GM10248 (cell line): ENCODE measurements at regions of chr1 and their contacts with region 1.

Region 1: GRCh38 chr1:40338745-40339424 is 21.8 kb upstream of the COL9A2 start:
- DNase-seq: peak; percentile 84
- CTCF ChIP-seq: peak; percentile 97

Region 2: DNA sequence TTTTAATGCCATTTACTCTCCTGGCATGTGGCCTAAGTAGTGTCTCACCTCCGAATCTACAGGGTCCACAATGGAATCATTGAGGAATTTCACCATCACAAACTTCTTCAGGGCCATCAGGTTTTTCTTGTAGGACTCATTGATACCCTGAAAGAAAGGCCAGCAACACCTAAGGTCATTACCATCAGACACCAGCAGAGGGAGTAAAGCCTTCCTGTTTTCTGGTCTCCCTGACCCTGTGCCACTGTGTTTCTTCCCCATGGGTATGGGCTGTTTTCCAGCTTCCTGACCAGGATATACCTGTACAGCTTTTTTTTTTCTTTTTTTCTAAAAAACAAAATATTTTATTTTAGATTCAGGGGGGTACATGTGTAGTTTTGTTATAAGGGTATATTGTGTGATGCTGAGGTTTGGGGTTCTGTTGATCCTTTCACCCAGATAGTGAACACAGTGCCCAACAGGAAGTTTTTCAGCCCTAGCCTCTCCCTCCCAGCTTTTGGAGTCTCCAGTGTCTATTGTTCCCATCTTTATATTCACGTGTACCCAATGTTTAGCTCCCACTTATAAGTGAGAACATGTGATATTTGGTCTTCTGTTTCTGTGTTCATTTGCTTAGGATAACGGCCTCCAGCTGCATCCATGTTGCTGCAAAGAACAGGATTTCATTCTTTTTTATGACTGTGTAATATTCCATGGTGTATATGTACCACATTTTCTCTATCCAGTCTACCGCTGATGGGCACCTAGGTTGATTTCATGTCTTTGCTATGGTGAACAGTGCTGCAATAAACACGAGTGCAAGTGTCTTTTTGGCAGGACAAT is 260.2 kb before region 1 on chr1:
- CTCF ChIA-PET with region 1: interaction called, 262 read pairs
- POLR2A ChIA-PET with region 1: no interaction called
- DNase-seq: peak; percentile 69
- CTCF ChIP-seq: peak; percentile 70

Region 3: GRCh38 chr1:40143891-40144575 is 194.9 kb before region 1 on chr1:
- CTCF ChIA-PET with region 1: interaction called, 182 read pairs
- POLR2A ChIA-PET with region 1: no interaction called
- DNase-seq: peak; percentile 54
- CTCF ChIP-seq: peak; percentile 48

Region 4: DNA sequence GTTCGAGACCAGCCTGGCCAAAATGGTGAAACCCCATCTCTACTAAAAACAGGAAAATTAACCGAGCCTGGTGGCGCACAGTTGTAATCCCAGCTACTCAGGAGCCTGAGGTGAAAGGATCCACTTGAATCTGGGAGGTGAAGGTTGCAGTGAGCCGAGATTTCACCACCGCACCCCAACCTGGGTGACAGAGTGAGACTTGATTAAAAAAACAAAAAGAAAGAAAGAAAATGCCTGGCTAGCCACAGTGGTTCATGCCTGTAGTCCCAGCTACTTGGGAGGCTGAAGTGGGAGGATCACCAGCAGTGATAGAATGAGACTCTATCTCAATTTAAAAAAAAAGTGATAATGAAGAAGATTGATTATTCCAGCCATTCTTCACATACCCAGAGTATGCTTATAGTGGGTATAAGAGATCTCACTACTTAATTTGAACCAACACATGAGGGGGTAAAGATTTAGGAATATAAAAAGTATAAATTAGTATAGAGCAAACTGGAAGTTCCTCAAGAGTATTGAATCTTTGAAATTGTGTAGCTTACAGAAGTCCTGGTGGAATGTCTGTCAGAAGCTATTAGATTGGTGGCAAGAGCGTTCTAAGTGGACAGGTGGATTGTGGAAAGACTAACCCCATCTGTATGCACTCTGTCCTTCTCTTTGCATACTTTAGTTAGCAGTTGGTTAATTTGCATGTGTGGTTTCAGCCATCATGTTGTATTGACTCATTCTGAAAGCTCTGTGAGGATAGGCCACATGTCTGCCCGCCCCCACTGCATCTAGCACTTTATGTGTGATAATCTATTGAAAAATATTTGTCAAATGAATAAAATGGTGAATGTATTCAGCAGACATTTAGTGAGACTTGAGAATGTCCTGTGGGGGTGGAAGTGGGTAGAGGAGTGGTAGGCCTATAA is 152.7 kb before region 1 on chr1:
- CTCF ChIA-PET with region 1: interaction called, 10 read pairs
- POLR2A ChIA-PET with region 1: no interaction called
- DNase-seq: peak; percentile 76
- CTCF ChIP-seq: no peak

Region 5: GRCh38 chr1:40352126-40352525 is 13.2 kb after region 1 on chr1:
- CTCF ChIA-PET with region 1: interaction called, 37 read pairs
- POLR2A ChIA-PET with region 1: no interaction called
- DNase-seq: peak; percentile 52
- CTCF ChIP-seq: no peak

Region 6: DNA sequence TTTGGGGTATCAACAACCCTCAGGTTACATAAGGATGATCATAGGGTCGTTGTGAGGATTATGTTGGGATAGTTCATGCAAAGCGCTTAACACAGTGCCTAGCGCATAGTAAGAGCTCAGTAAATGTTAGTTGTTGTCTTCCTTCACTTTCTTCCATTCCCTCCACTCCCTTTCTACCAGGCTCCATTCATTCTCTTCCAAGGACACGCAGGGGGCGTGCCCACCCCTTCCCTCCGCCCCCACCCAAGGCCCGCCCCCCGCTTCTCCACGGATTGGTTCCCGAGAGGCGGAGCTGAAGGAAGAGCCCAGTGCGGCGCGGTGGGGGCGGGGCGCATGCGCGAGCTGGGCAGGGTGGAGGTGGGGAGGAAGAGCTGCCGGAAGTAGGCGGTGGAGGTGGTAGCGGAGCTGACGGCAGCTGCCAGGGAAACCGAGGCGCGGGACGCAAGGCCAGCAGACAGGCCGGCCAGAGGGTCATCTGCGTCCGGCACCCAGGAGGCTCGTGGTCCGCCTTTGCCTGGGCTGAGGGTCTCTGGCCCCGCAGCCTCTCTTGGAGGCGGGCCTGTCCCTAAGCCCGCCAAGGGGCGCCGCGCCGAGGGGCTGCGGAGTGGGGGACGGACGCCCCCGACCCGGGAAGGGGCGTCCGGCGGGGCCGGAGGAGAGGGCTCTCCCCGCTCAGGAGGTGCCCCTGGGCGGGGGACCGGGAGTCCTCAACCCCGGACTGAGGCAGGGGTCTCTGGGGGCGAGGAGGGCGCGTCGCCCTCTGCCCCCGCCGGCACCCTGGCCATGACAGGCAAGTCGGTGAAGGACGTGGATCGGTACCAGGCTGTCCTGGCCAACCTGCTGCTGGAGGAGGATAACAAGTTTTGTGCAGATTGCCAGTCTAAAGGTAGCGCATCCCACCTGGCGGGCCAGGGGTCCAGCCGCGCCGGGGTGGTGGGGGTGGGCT is 34.7 kb after region 1 on chr1 and contains the start of gene SMAP2:
- CTCF ChIA-PET with region 1: interaction called, 25 read pairs
- POLR2A ChIA-PET with region 1: no interaction called
- DNase-seq: peak; percentile 99
- CTCF ChIP-seq: no peak

Region 7: DNA sequence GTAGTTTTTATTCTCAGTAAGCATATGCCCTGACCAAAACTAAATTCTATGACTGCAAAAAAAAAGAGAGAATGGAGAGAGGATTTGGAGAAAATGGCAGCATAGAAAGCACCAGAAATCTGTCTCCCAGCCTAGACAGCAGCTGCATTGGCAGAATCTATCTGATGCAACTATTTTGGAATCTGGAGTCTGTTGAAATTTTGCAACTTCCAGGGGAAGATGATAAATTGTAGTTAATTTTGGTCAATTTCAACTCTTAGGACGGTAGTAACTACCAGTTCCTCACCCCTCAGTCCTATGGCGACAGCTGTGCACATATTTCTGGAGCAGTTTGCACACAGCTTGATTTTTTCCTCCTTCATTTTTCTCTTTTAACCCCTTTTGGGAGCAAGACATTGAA is 180.6 kb after region 1 on chr1:
- CTCF ChIA-PET with region 1: no interaction called
- POLR2A ChIA-PET with region 1: no interaction called
- DNase-seq: no peak
- CTCF ChIP-seq: no peak